ENCODE measurements at regions of chr1 and their contacts with region 1.

Region 1: DNA sequence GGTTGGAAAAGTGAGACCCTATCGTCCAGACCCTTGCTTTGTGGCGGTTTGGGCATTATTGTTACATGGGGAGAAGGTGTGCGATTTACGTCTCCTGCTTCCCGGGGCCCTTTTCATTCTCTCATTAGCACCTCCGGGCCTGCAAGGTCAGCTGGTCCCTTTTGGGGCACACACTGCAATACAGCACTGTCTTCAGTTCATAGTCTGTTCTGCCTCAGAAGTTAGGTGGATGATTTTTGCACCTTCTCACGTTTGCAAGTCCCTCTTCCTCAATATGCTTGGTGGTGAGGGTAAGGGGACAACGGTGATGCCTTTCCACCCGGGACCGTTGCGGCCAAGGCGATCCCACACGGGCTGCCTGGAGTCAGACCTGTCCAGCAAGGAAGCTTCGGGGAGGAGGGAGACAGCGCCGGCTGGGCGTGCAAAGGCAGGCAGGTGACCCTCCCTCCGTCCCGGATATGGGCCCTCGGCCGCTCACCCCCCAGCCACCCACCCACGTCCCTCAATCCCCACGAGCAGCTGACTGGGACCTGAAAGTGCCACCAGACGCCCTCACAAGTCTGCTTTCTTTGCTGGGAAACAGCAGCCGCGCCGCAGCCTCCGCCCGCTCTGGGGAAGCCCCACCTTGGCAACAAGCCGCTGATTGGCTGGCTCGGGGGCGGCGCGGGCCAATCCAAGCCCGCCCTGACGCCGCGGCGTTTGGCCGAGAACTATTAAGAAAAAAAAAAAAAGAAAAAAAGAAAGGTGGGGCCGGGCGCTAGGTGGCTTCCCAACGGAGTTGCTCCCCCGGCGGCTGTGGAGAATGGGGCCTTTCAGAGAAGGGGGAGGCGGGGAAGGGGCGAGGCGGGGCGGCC is 21.7 kb downstream of the BTG2 start:
- DNase-seq: peak; percentile 96
- ATAC-seq: peak; percentile 82
- H3K4me3 Mint-ChIP-seq: peak overlapping the region; percentile 75
- H3K27ac Mint-ChIP-seq: peak overlapping the region; percentile 93
- H3K4me1 Mint-ChIP-seq: peaks cover 68% of the 10 kb centered on the region
- H3K27me3 Mint-ChIP-seq: no peaks in the 10 kb centered on the region
- CTCF ChIP-seq: no peak

Region 2: DNA sequence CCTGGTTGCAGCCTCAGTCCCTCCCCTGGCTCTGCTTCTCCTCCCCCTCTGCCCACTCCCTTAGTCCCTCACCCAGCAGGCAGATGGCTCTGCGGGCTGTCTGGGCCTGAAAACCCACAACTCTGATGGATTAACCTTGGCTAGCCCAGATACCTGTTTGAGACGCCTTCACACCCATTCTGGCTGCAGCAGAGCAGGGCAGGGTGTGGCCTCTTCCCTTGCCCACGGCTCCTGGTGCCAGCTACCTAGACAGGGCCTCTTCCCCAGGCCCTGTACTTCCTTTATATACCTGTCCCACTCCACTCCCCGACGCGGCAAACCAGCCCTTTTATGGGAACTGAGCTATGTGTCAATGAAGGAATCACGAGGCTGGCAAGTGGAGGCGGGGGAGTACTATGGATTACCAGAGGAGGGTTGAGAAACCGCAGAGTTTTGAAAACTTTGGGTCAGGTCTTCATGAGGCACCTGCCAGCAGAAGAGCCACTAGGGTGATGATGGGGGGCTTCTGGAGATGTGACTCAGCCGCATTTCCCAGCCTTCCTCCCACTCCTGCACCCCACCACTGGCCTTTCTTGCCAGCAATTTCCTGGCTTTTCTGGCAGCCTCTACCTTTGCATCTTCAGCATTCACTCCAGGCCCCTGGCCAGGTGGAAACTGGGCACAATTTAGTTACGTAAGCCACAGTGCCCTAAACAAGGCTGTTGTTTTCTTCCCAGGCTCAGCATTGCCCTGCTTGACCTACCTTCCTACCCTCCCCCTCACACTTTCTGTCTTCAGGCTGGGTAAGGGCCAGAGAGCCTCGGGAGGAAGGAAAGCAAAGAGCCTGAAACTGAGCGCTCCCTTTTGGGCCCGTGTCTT is 140.4 kb before region 1 on chr1 and contains the start of gene CHI3L1:
- CTCF ChIA-PET with region 1: no interaction called
- POLR2A ChIA-PET with region 1: no interaction called
- intact Hi-C with region 1: no loop called
- DNase-seq: peak; percentile 7
- ATAC-seq: peak; percentile 53
- H3K4me3 Mint-ChIP-seq: no peak within 1 kb of the TSS
- H3K27ac Mint-ChIP-seq: no peak within 1 kb of the TSS
- H3K4me1 Mint-ChIP-seq: peaks cover 4% of the 10 kb centered on the region
- H3K27me3 Mint-ChIP-seq: peaks cover 2% of the 10 kb centered on the region
- CTCF ChIP-seq: no peak
- total RNA-seq, gene CHI3L1: not detected

Region 3: GRCh38 chr1:203273206-203273868 is 53.7 kb before region 1 on chr1:
- CTCF ChIA-PET with region 1: interaction called, 1,114 read pairs
- POLR2A ChIA-PET with region 1: interaction called, 31 read pairs
- intact Hi-C with region 1: no loop called
- DNase-seq: peak; percentile 94
- ATAC-seq: peak; percentile 73
- H3K4me3 Mint-ChIP-seq: peak overlapping the region; percentile 77
- H3K27ac Mint-ChIP-seq: peak overlapping the region; percentile 83
- H3K4me1 Mint-ChIP-seq: peaks cover 57% of the 10 kb centered on the region
- H3K27me3 Mint-ChIP-seq: no peaks in the 10 kb centered on the region
- CTCF ChIP-seq: peak; percentile 93

Region 4: GRCh38 chr1:203280996-203281395 is 46.1 kb before region 1 on chr1:
- CTCF ChIA-PET with region 1: interaction called, 1,114 read pairs
- POLR2A ChIA-PET with region 1: interaction called, 152 read pairs
- intact Hi-C with region 1: no loop called
- DNase-seq: no peak
- ATAC-seq: no peak
- H3K4me3 Mint-ChIP-seq: no peak overlapping the region
- H3K27ac Mint-ChIP-seq: no peak overlapping the region
- H3K4me1 Mint-ChIP-seq: peaks cover 51% of the 10 kb centered on the region
- H3K27me3 Mint-ChIP-seq: no peaks in the 10 kb centered on the region
- CTCF ChIP-seq: no peak

Region 5: GRCh38 chr1:203290261-203291089 is 36.6 kb before region 1 on chr1:
- CTCF ChIA-PET with region 1: interaction called, 23 read pairs
- POLR2A ChIA-PET with region 1: interaction called, 152 read pairs
- intact Hi-C with region 1: loop called (anchors 1 kb)
- DNase-seq: peak; percentile 99
- ATAC-seq: peak; percentile 55
- H3K4me3 Mint-ChIP-seq: peak overlapping the region; percentile 83
- H3K27ac Mint-ChIP-seq: peak overlapping the region; percentile 100
- H3K4me1 Mint-ChIP-seq: peaks cover 79% of the 10 kb centered on the region
- H3K27me3 Mint-ChIP-seq: peaks cover 1% of the 10 kb centered on the region
- CTCF ChIP-seq: no peak

Region 6: DNA sequence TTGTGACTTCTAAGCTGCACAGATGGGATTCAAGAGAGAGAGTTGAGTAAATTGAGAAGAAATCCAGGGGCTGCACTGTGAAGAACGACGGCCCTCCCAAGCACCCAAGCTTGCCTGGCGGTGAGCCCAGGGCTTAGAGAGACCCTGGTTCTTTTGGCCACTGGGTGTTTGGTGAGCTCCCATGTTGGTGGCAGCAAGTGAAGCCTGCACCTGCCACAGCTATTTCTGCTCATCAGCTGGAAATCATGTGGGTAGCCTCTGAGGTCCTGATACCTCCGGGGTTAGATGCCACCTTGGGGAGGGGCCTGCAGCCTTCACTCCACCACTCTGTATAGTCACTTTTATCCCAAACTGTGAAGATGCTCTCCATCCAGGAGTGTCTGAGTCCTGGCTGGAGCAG is 27.9 kb before region 1 on chr1:
- CTCF ChIA-PET with region 1: interaction called, 11 read pairs
- POLR2A ChIA-PET with region 1: interaction called, 5 read pairs
- intact Hi-C with region 1: no loop called
- DNase-seq: no peak
- ATAC-seq: no peak
- H3K4me3 Mint-ChIP-seq: no peak overlapping the region
- H3K27ac Mint-ChIP-seq: no peak overlapping the region
- H3K4me1 Mint-ChIP-seq: peaks cover 63% of the 10 kb centered on the region
- H3K27me3 Mint-ChIP-seq: no peaks in the 10 kb centered on the region
- CTCF ChIP-seq: no peak

Region 7: GRCh38 chr1:203304919-203305808 is 21.9 kb before region 1 on chr1 and contains the start of gene BTG2:
- CTCF ChIA-PET with region 1: interaction called, 108 read pairs
- POLR2A ChIA-PET with region 1: interaction called, 224 read pairs
- intact Hi-C with region 1: no loop called
- DNase-seq: peak; percentile 93
- ATAC-seq: peak; percentile 85
- H3K4me3 Mint-ChIP-seq: peak within 1 kb of the TSS; percentile 99
- H3K27ac Mint-ChIP-seq: peak within 1 kb of the TSS; percentile 98
- H3K4me1 Mint-ChIP-seq: peaks cover 55% of the 10 kb centered on the region
- H3K27me3 Mint-ChIP-seq: no peaks in the 10 kb centered on the region
- CTCF ChIP-seq: no peak
- total RNA-seq, gene BTG2: 115 TPM

Region 8: GRCh38 chr1:203408486-203409427 is 81.7 kb after region 1 on chr1:
- CTCF ChIA-PET with region 1: no interaction called
- POLR2A ChIA-PET with region 1: no interaction called
- intact Hi-C with region 1: no loop called
- DNase-seq: no peak
- ATAC-seq: no peak
- H3K4me3 Mint-ChIP-seq: no peak overlapping the region
- H3K27ac Mint-ChIP-seq: no peak overlapping the region
- H3K4me1 Mint-ChIP-seq: no peaks in the 10 kb centered on the region
- H3K27me3 Mint-ChIP-seq: peaks cover 16% of the 10 kb centered on the region
- CTCF ChIP-seq: no peak

Measured in activated CD8-positive, alpha-beta T cell treated with anti-CD3 and anti-CD28 coated beads for 36 hours (primary cell).